ENCODE measurements at regions of chr6 and their contacts with region 1.

Region 1: GRCh38 chr6:19851241-19852089 is 14.3 kb downstream of the ID4 start:
- DNase-seq: peak; percentile 51
- H3K4me3 ChIP-seq: no peak overlapping the region
- H3K27ac ChIP-seq: no peak overlapping the region
- H3K4me1 ChIP-seq: no peaks in the 10 kb centered on the region
- H3K27me3 ChIP-seq: no peaks in the 10 kb centered on the region
- CTCF ChIP-seq: peak; percentile 11 to 89 (median 76)
- POLR2A ChIP-seq: no peak

Region 2: DNA sequence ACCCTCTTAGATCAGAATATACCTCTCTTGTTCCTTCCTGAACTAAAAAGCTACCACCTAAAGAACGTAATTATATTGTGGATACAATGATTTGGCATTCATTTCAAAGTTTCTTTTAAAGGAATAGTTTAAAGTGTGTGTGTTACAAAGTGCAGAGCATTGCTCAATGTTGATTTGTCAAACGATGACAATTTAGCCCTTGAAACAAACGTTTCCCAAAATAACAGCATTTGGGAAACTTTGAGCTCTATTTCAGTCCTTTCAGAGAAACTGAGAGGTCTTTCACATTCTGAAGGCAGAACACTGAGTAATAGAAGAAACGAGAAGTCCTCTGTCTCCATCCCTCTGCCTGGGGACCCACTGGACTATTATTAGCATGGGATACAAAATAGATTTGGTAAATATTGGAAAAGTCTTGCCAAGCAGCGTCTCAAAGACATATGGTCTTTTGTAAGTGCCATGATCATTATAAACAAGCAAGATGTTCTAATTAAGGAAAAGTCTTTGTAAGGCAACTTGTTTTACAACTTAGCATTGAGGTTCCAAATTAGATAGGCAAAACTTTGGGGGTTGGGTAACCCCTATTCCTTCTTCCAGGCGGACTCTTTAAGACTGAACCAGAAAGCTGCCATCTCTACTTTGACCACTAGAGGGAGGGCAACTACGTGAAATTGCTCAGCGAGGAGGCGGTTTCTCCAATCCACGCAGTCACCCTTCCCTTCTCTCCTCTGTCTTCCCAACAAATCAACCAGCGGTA is 1255.5 kb before region 1 on chr6:
- intact Hi-C with region 1: loop called (anchors 10 kb)
- DNase-seq: peak; percentile 55
- H3K4me3 ChIP-seq: no peak overlapping the region
- H3K27ac ChIP-seq: no peak overlapping the region
- H3K4me1 ChIP-seq: no peaks in the 10 kb centered on the region
- H3K27me3 ChIP-seq: no peaks in the 10 kb centered on the region
- CTCF ChIP-seq: peak; percentile 77 to 85 (median 80)
- POLR2A ChIP-seq: no peak

Region 3: GRCh38 chr6:18748314-18748713 is 1103.2 kb before region 1 on chr6:
- intact Hi-C with region 1: loop called (anchors 5 kb)
- DNase-seq: no peak
- H3K4me3 ChIP-seq: no peak overlapping the region
- H3K27ac ChIP-seq: no peak overlapping the region
- H3K4me1 ChIP-seq: no peaks in the 10 kb centered on the region
- H3K27me3 ChIP-seq: no peaks in the 10 kb centered on the region
- CTCF ChIP-seq: no peak
- POLR2A ChIP-seq: no peak

Region 4: DNA sequence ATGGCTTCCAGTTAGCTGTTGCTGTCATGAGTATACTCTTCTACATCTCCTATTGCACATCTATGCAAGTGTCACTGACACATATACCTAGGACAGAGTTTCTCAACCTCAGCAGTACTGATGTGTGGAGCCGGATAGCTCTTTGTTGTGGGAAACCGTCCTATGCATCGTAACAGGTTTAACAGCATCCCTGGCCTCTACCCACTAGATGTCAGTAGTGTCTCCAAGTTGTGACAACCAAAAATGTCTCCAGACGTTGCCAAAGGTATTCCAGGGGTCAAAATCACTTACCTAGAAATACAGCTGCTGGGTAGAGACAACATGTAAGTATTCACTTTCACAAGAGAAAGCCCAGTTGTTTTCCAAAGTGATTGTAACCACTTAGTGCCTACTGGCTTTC is 826.7 kb before region 1 on chr6:
- intact Hi-C with region 1: loop called (anchors 10 kb)
- DNase-seq: peak; percentile 30
- H3K4me3 ChIP-seq: no peak overlapping the region
- H3K27ac ChIP-seq: no peak overlapping the region
- H3K4me1 ChIP-seq: no peaks in the 10 kb centered on the region
- H3K27me3 ChIP-seq: no peaks in the 10 kb centered on the region
- CTCF ChIP-seq: peak in 3 of 4 experiments; percentile 41 to 57 (median 53)
- POLR2A ChIP-seq: no peak

Region 5: GRCh38 chr6:19812512-19813119 is 38.8 kb before region 1 on chr6:
- intact Hi-C with region 1: loop called (anchors 5 kb)
- DNase-seq: no peak
- H3K4me3 ChIP-seq: no peak overlapping the region
- H3K27ac ChIP-seq: no peak overlapping the region
- H3K4me1 ChIP-seq: no peaks in the 10 kb centered on the region
- H3K27me3 ChIP-seq: no peaks in the 10 kb centered on the region
- CTCF ChIP-seq: peak in 3 of 4 experiments; percentile 52 to 59 (median 53)
- POLR2A ChIP-seq: no peak

Region 6: DNA sequence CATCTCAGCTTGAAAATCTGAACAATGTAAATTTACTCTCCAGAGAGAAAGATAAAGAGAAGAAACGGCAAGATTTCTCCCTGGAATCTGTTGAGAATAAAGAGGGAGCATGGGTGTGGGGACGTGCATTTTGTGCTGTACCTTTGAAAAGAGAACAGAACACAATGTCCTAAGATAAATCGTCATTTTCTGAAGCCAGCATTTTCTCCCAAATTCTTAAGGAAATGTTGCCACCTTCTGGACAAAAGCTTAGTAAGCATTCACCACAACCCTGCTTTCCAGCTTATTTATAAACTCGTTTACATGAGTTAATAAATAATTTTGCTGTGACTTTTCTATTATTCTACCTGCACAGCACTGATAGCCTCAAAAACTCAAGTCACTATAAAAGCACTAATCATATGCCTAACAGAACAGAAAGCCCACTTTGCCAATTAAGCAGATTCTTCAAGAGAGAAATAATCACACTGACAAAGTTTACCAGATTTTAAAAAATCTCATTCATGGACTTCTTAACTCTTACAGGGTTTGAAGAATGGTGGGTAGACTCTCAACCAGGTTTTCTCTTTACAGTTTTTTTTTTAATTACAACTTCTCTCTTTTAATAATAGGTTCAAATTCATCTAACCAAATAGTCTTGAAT is 205.0 kb after region 1 on chr6:
- intact Hi-C with region 1: loop called (anchors 10 kb)
- DNase-seq: no peak
- H3K4me3 ChIP-seq: no peak overlapping the region
- H3K27ac ChIP-seq: no peak overlapping the region
- H3K4me1 ChIP-seq: no peaks in the 10 kb centered on the region
- H3K27me3 ChIP-seq: no peaks in the 10 kb centered on the region
- CTCF ChIP-seq: peak; percentile 9 to 69 (median 56)
- POLR2A ChIP-seq: no peak